ENCODE measurements at regions of chr2 and their contacts with region 1.

Region 1: GRCh38 chr2:163182764-163183354 is 344.3 kb upstream of the KCNH7 start:
- DNase-seq: no peak
- ATAC-seq: peak; percentile 51; the same call in 2 of the 3 replicates
- H3K4me3 ChIP-seq: no peak overlapping the region
- H3K27ac ChIP-seq: no peak overlapping the region
- H3K4me1 ChIP-seq: no peaks in the 10 kb centered on the region
- H3K27me3 ChIP-seq: no peaks in the 10 kb centered on the region
- CTCF ChIP-seq: peak; percentile 36 to 55 (median 45); a peak in 4 of 6 replicates
- EP300 ChIP-seq: no peak
- POLR2A ChIP-seq: no peak
- RAD21 ChIP-seq: peak; percentile 37

Region 2: GRCh38 chr2:163580769-163581168 is 397.9 kb after region 1 on chr2:
- CTCF ChIA-PET with region 1: no interaction called
- POLR2A ChIA-PET with region 1: no interaction called
- RAD21 ChIA-PET with region 1: no interaction called
- SMC1A ChIA-PET with region 1: no interaction called
- in situ Hi-C with region 1: no loop called
- intact Hi-C with region 1: loop called (anchors 10 kb)
- DNase-seq: no peak
- ATAC-seq: no peak
- H3K4me3 ChIP-seq: no peak overlapping the region
- H3K27ac ChIP-seq: no peak overlapping the region
- H3K4me1 ChIP-seq: no peaks in the 10 kb centered on the region
- H3K27me3 ChIP-seq: no peaks in the 10 kb centered on the region
- CTCF ChIP-seq: no peak
- EP300 ChIP-seq: no peak
- POLR2A ChIP-seq: no peak
- RAD21 ChIP-seq: no peak

Region 3: GRCh38 chr2:164055623-164056022 is 872.8 kb after region 1 on chr2:
- CTCF ChIA-PET with region 1: interaction called, 14 read pairs
- POLR2A ChIA-PET with region 1: no interaction called
- RAD21 ChIA-PET with region 1: interaction called, 4 read pairs
- SMC1A ChIA-PET with region 1: interaction called, 9 read pairs
- in situ Hi-C with region 1: loop called (anchors 10 kb)
- intact Hi-C with region 1: no loop called
- DNase-seq: no peak
- ATAC-seq: no peak
- H3K4me3 ChIP-seq: no peak overlapping the region
- H3K27ac ChIP-seq: no peak overlapping the region
- H3K4me1 ChIP-seq: no peaks in the 10 kb centered on the region
- H3K27me3 ChIP-seq: no peaks in the 10 kb centered on the region
- CTCF ChIP-seq: no peak
- EP300 ChIP-seq: no peak
- POLR2A ChIP-seq: no peak
- RAD21 ChIP-seq: no peak